ENCODE measurements at regions of chr10 and their contacts with region 1.

Region 1: GRCh38 chr10:3785257-3785850 is 345 bp upstream of the KLF6 start:
- DNase-seq: peak; percentile 99 to 100 (median 99)
- H3K4me3 ChIP-seq: peak overlapping the region; percentile 79
- H3K4me3 Mint-ChIP-seq: peak overlapping the region; percentile 91 to 99 (median 97)
- H3K27ac ChIP-seq: peak overlapping the region; percentile 100
- H3K27ac Mint-ChIP-seq: peak overlapping the region; percentile 93 to 100 (median 99)
- H3K4me1 ChIP-seq: peaks cover 27% of the 10 kb centered on the region
- H3K4me1 Mint-ChIP-seq: peaks cover 27 to 55% (median 36%) of the 10 kb centered on the region in 3 donors
- H3K27me3 ChIP-seq: no peaks in the 10 kb centered on the region
- H3K27me3 Mint-ChIP-seq: peaks cover 0 to 29% of the 10 kb centered on the region in 2 donors

Region 2: DNA sequence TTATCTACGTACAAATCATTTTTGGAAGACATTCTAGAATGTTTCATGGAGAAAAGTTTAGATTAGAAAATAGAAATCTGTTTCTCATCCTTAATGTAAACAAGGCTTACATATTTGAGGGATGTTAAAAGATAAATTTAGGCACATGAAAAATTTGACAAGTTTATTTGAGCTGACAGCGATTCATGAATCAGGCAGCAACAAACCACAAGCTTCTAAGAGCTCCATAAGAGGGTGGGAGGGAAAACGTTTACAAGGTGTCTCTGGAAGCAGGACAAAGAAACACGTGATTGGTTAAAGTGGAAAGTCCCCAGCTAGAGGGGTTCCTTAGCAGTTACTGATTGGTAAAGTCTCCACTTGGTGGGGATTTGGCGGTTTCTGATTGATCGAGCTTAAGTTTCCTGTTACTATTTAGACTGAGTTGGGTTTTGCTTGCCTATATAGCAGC is 383.8 kb before region 1 on chr10:
- CTCF ChIA-PET with region 1: no interaction called
- POLR2A ChIA-PET with region 1: no interaction called
- DNase-seq: no peak
- H3K4me3 ChIP-seq: no peak overlapping the region
- H3K4me3 Mint-ChIP-seq: no peak overlapping the region
- H3K27ac ChIP-seq: no peak overlapping the region
- H3K27ac Mint-ChIP-seq: peak overlapping the region in 2 of 8 donors; percentile 5 to 43
- H3K4me1 ChIP-seq: no peaks in the 10 kb centered on the region
- H3K4me1 Mint-ChIP-seq: no peaks in the 10 kb centered on the region
- H3K27me3 ChIP-seq: no peaks in the 10 kb centered on the region
- H3K27me3 Mint-ChIP-seq: peaks cover 0 to 7% of the 10 kb centered on the region in 2 donors

Region 3: GRCh38 chr10:3765146-3765545 is 20.2 kb before region 1 on chr10:
- CTCF ChIA-PET with region 1: no interaction called
- POLR2A ChIA-PET with region 1: interaction called, 16 read pairs
- DNase-seq: peak in 1 of 5 donors; percentile 21
- H3K4me3 ChIP-seq: peak overlapping the region; percentile 16
- H3K4me3 Mint-ChIP-seq: peak overlapping the region; percentile 18 to 89 (median 63)
- H3K27ac ChIP-seq: no peak overlapping the region
- H3K27ac Mint-ChIP-seq: peak overlapping the region; percentile 38 to 97 (median 80)
- H3K4me1 ChIP-seq: peaks cover 36% of the 10 kb centered on the region
- H3K4me1 Mint-ChIP-seq: peaks cover 59 to 89% (median 80%) of the 10 kb centered on the region in 3 donors
- H3K27me3 ChIP-seq: no peaks in the 10 kb centered on the region
- H3K27me3 Mint-ChIP-seq: no peaks in the 10 kb centered on the region

Region 4: GRCh38 chr10:3828404-3829155 is 43.2 kb after region 1 on chr10:
- CTCF ChIA-PET with region 1: interaction called, 5 read pairs
- POLR2A ChIA-PET with region 1: interaction called, 59 read pairs
- DNase-seq: peak in 2 of 5 donors; percentile 34 to 57
- H3K4me3 ChIP-seq: peak overlapping the region; percentile 35
- H3K4me3 Mint-ChIP-seq: peak overlapping the region; percentile 75 to 88 (median 80)
- H3K27ac ChIP-seq: peak overlapping the region; percentile 67
- H3K27ac Mint-ChIP-seq: peak overlapping the region; percentile 72 to 96 (median 94)
- H3K4me1 ChIP-seq: peaks cover 15% of the 10 kb centered on the region
- H3K4me1 Mint-ChIP-seq: peaks cover 21 to 51% (median 22%) of the 10 kb centered on the region in 3 donors
- H3K27me3 ChIP-seq: no peaks in the 10 kb centered on the region
- H3K27me3 Mint-ChIP-seq: no peaks in the 10 kb centered on the region

Region 5: GRCh38 chr10:3887885-3888476 is 102.6 kb after region 1 on chr10:
- CTCF ChIA-PET with region 1: interaction called, 6 read pairs
- POLR2A ChIA-PET with region 1: interaction called, 44 read pairs
- DNase-seq: peak in 4 of 5 donors; percentile 68 to 87 (median 72)
- H3K4me3 ChIP-seq: no peak overlapping the region
- H3K4me3 Mint-ChIP-seq: peak overlapping the region; percentile 35 to 83 (median 77)
- H3K27ac ChIP-seq: peak overlapping the region; percentile 53
- H3K27ac Mint-ChIP-seq: peak overlapping the region; percentile 89 to 99 (median 98)
- H3K4me1 ChIP-seq: peaks cover 33% of the 10 kb centered on the region
- H3K4me1 Mint-ChIP-seq: peaks cover 36 to 58% (median 48%) of the 10 kb centered on the region in 3 donors
- H3K27me3 ChIP-seq: no peaks in the 10 kb centered on the region
- H3K27me3 Mint-ChIP-seq: no peaks in the 10 kb centered on the region

Region 6: DNA sequence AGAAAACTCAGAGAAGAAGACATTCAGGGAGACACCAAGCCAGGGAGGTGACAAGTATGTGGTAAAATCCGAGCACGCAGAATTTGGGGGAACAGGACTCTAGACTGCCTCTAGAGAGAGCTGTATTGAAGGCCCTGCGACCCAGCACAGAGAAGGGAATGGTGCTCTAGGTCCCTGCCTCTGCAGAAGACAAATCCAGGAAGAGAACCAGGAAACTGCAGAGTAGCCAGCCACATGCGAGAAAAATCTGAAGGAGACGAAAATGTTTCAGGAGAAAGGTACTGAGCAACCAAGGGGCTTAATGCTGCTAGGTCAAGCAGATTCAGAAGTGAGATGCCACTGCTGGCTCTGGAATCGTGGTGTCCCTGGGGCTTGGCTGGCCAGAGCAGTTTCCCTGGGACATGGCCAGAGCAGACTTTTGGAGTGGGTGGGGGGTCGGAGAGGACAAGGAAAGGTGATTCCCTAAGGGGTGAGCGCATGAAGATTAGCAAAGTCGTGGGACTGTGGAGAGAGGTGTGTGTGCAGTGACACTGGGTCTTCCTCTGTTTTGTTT is 157.7 kb after region 1 on chr10:
- CTCF ChIA-PET with region 1: interaction called, 5 read pairs
- POLR2A ChIA-PET with region 1: interaction called, 57 read pairs
- DNase-seq: no peak
- H3K4me3 ChIP-seq: no peak overlapping the region
- H3K4me3 Mint-ChIP-seq: peak overlapping the region in 5 of 7 donors; percentile 11 to 69 (median 51)
- H3K27ac ChIP-seq: no peak overlapping the region
- H3K27ac Mint-ChIP-seq: peak overlapping the region; percentile 28 to 93 (median 85)
- H3K4me1 ChIP-seq: peaks cover 26% of the 10 kb centered on the region
- H3K4me1 Mint-ChIP-seq: peaks cover 38 to 62% (median 55%) of the 10 kb centered on the region in 3 donors
- H3K27me3 ChIP-seq: no peaks in the 10 kb centered on the region
- H3K27me3 Mint-ChIP-seq: no peaks in the 10 kb centered on the region

Region 7: GRCh38 chr10:3972460-3973301 is 187.3 kb after region 1 on chr10:
- CTCF ChIA-PET with region 1: interaction called, 3 read pairs
- POLR2A ChIA-PET with region 1: interaction called, 11 read pairs
- DNase-seq: peak in 4 of 5 donors; percentile 11 to 55 (median 15)
- H3K4me3 ChIP-seq: peak overlapping the region; percentile 24
- H3K4me3 Mint-ChIP-seq: peak overlapping the region; percentile 24 to 91 (median 81)
- H3K27ac ChIP-seq: peak overlapping the region; percentile 34
- H3K27ac Mint-ChIP-seq: peak overlapping the region; percentile 82 to 99 (median 96)
- H3K4me1 ChIP-seq: peaks cover 74% of the 10 kb centered on the region
- H3K4me1 Mint-ChIP-seq: peaks cover 54 to 64% (median 63%) of the 10 kb centered on the region in 3 donors
- H3K27me3 ChIP-seq: no peaks in the 10 kb centered on the region
- H3K27me3 Mint-ChIP-seq: no peaks in the 10 kb centered on the region

Measured in CD8-positive, alpha-beta memory T cell (primary cell).